ENCODE measurements at regions of chr11 and their contacts with region 1.

Region 1: GRCh38 chr11:111230122-111230465 is 15.4 kb upstream of the POU2AF2 start:
- DNase-seq: no peak
- ATAC-seq: peak; percentile 56
- H3K4me3 ChIP-seq: no peak overlapping the region
- H3K4me3 Mint-ChIP-seq: peak overlapping the region; percentile 56
- H3K27ac ChIP-seq: no peak overlapping the region
- H3K27ac Mint-ChIP-seq: no peak overlapping the region
- H3K4me1 ChIP-seq: peaks cover 18% of the 10 kb centered on the region
- H3K4me1 Mint-ChIP-seq: peaks cover 19% of the 10 kb centered on the region
- H3K27me3 ChIP-seq: peaks cover 0 to 7% of the 10 kb centered on the region in 2 experiments
- H3K27me3 Mint-ChIP-seq: peaks cover 14% of the 10 kb centered on the region
- CTCF ChIP-seq: no peak

Region 2: DNA sequence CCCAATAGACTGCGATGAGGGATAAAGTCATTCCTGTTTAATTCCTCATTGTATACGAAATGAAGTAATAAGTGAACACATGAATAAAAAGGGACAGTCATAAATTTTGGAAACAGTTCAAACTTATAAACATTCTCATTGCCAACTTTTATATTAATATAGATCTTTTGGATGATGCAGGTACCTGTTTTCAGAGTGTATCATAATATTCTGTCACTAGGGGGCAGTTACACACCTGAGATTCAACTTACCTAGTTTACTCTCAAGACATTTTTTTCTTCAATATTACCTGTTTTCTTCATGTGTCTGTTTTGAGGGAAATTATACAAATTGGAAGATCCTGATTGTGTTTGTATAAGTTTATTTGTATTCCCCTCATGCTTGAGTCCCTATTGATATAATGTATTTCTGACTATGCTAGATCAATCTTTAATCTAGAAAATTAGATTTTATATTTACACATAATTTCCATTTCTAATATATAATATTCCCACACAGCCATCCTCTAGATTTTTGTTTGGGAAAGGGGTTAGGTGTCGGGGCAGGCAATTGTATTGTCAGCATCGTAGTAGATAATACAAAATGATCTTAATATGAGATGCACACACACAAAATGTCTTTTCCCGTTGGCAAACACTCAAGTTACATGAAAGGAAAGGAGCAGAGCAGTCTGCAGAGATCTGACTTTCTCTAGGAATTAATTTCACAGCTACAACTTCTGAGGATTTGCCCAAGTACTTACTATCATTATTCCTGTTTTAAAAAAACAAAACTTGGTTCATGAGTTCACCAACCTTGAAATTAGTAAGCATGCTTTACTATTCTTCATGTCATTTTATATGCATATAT is 782.0 kb before region 1 on chr11:
- CTCF ChIA-PET with region 1: no interaction called
- POLR2A ChIA-PET with region 1: no interaction called
- intact Hi-C with region 1: loop called (anchors 2 to 5 kb)
- DNase-seq: peak in 3 of 14 experiments; percentile 32 to 45 (median 39)
- ATAC-seq: peak; percentile 43
- H3K4me3 ChIP-seq: no peak overlapping the region
- H3K4me3 Mint-ChIP-seq: no peak overlapping the region
- H3K27ac ChIP-seq: no peak overlapping the region
- H3K27ac Mint-ChIP-seq: no peak overlapping the region
- H3K4me1 ChIP-seq: no peaks in the 10 kb centered on the region
- H3K4me1 Mint-ChIP-seq: peaks cover 40% of the 10 kb centered on the region
- H3K27me3 ChIP-seq: no peaks in the 10 kb centered on the region
- H3K27me3 Mint-ChIP-seq: no peaks in the 10 kb centered on the region
- CTCF ChIP-seq: peak; percentile 70

Measured in CD4-positive, alpha-beta T cell (primary cell).